ENCODE measurements at regions of chr10 and their contacts with region 1.

Region 1: DNA sequence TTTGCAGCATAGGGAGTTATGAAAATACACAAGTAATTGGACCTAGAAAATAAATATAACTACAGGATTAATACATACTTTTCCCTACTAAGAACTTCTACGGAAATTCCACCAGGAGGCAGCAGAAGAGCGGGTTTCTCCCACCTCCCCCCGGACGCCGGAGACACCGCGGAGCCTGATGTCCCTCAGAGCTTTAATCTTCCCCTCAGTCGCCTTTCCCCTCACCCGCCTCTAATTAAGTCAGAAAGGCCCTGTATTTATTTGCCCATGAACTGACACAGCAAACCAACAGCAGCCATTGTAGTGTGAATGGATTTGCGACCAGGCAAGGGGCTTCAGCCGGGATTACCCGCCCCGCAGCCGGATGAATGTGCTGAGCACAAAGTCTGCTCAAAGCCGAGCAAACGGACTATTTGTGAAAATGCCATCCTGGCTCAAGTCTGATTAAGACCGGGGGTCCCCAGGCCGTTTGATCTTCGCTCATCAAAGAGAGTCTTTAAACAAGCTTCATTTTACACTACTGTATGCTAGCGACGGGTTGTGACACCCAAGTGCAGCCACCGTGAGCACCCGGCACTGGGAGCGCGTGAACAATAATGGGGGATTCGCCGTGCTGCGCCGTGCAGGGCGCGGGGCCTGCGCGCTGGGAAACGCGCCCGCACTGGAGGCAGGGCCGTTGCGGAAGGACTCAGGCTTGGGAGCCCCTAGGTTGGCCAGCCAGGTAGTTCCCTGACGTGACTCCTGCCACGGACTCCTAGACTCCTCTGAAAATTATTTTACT is 5.6 kb upstream of the DKK1 start:
- DNase-seq: peak; percentile 62 to 80
- ATAC-seq: peak; percentile 83 to 91
- H3K4me3 ChIP-seq: peak overlapping the region; percentile 48
- H3K27ac ChIP-seq: peak overlapping the region; percentile 81 to 82
- H3K4me1 ChIP-seq: peaks cover 24% of the 10 kb centered on the region; the same call in 2 of the 3 replicates
- CTCF ChIP-seq: peak; percentile 94
- EP300 ChIP-seq: no peak
- POLR2A ChIP-seq: peak; percentile 19; the same call in 1 of the 2 replicates
- RAD21 ChIP-seq: peak; percentile 96 to 99

Region 2: GRCh38 chr10:52452600-52453493 is 144.4 kb after region 1 on chr10:
- CTCF ChIA-PET with region 1: interaction called, 10 read pairs
- POLR2A ChIA-PET with region 1: no interaction called
- DNase-seq: peak in 1 of 2 experiments; percentile 80
- ATAC-seq: peak; percentile 36 to 51
- H3K4me3 ChIP-seq: peak overlapping the region; percentile 29
- H3K27ac ChIP-seq: peak overlapping the region; percentile 84 to 87
- H3K4me1 ChIP-seq: peaks cover 72% of the 10 kb centered on the region
- CTCF ChIP-seq: no peak
- EP300 ChIP-seq: peak; percentile 96 to 98; a peak in 4 of 5 replicates
- POLR2A ChIP-seq: no peak
- RAD21 ChIP-seq: no peak; a peak in 2 of 5 replicates

Region 3: GRCh38 chr10:52488606-52489485 is 180.4 kb after region 1 on chr10:
- CTCF ChIA-PET with region 1: interaction called, 385 read pairs
- POLR2A ChIA-PET with region 1: interaction called, 44 read pairs
- DNase-seq: peak in 1 of 2 experiments; percentile 57
- ATAC-seq: peak in 1 of 2 experiments; percentile 73; a peak in 3 of 6 replicates
- H3K4me3 ChIP-seq: no peak overlapping the region
- H3K27ac ChIP-seq: peak overlapping the region; percentile 74 to 87
- H3K4me1 ChIP-seq: peaks cover 41% of the 10 kb centered on the region
- CTCF ChIP-seq: peak; percentile 80
- EP300 ChIP-seq: no peak
- POLR2A ChIP-seq: no peak
- RAD21 ChIP-seq: peak; percentile 86 to 93

Region 4: DNA sequence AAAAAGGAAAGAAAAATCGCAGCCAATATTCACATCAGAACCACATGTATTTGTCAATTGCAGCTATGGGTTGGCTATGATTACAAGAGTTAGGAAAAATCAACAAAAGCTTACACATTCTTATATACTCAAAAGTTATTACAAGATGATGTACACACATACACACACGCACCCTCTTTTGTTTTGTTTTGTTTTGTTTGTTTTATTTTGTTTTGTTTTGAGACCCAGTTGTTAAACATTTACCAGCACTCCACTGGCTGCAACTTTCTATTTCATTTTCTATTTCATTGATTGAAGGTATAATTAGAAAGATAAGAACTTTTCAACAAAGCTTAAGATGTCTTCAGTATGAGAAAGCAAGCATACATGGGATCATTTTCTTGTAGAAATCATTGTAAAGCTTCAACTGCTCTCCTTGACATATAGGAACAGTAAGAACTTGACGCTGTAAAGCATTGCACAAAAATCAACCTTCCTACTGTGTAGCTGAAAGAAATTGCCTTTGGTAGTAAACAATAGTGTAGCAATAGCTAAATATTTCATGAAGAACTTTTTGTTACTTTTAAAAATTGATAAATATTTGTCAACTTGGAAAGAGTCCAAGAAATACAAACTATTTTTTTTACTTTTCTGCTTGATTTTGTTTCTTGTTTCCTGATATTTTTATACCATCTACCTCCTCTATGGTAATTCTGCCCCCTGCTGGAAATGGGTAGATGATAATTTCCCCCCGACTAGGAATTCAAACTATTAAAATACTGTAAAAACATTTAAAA is 258.2 kb after region 1 on chr10:
- CTCF ChIA-PET with region 1: interaction called, 95 read pairs
- POLR2A ChIA-PET with region 1: interaction called, 9 read pairs
- DNase-seq: peak; percentile 32 to 65
- ATAC-seq: peak; percentile 59 to 83; a peak in 4 of 6 replicates
- H3K4me3 ChIP-seq: no peak overlapping the region
- H3K27ac ChIP-seq: peak overlapping the region; percentile 37 to 45
- H3K4me1 ChIP-seq: peaks cover 12% of the 10 kb centered on the region
- CTCF ChIP-seq: peak; percentile 87
- EP300 ChIP-seq: no peak
- POLR2A ChIP-seq: no peak
- RAD21 ChIP-seq: peak; percentile 91 to 92

Region 5: DNA sequence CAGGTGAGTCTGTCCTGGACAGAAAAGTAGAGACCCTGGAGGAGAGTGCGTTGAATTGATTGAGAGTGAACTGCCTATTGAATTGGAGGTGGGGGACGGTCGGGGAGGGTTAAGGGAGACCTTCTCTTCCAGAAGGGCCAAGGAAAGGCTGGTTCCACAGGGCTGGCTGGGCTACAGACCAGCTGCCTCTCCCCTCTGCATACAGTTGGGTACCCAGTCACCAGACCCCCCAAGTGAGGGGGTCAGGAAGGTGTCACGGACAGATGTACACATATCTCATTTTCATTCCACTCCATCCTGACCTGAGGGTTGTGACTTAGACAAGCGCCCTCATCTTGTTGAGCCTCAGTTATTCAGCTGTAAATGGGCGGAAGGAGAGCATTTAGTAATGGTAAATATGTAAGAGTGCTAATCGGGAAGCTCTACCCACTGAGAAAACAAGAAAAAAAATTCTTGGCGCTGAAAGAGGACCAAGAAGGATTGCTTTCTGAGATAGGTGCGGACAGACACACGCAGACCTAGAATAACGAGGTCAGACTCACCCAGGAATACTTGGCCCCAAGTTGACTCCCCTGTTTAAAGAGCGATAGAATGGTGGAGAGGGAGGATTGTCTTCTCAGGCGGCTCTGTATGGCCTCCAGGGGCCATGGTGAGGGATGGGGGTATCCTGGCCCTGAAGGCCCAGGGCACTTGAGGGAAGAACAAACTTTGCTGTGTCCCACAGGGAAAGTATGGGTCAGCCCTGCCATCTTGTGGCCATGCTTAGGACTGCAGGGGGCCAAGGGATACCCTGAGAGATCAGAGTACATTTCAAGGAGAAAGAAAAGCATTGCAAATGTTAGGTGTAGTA is 471.3 kb after region 1 on chr10:
- CTCF ChIA-PET with region 1: interaction called, 10 read pairs
- POLR2A ChIA-PET with region 1: no interaction called
- DNase-seq: peak; percentile 60 to 62
- ATAC-seq: peak; percentile 86 to 95
- H3K4me3 ChIP-seq: no peak overlapping the region
- H3K27ac ChIP-seq: no peak overlapping the region
- H3K4me1 ChIP-seq: no peaks in the 10 kb centered on the region
- CTCF ChIP-seq: peak; percentile 86
- EP300 ChIP-seq: no peak
- POLR2A ChIP-seq: no peak
- RAD21 ChIP-seq: peak; percentile 87 to 92